Activated T-helper 2 cell treated with anti-CD3 and anti-CD28 coated beads, Interferon-gamma antibody, Interleukin-2, Interleukin-4, amounts not matched to agents 10 μg/mL and 5 μg/mL and 100 μg/mL, durations not matched to agents 14 hours and 24 hours and 36 hours (primary cell): ENCODE measurements at regions of chr13 and their contacts with region 1.

Region 1: DNA sequence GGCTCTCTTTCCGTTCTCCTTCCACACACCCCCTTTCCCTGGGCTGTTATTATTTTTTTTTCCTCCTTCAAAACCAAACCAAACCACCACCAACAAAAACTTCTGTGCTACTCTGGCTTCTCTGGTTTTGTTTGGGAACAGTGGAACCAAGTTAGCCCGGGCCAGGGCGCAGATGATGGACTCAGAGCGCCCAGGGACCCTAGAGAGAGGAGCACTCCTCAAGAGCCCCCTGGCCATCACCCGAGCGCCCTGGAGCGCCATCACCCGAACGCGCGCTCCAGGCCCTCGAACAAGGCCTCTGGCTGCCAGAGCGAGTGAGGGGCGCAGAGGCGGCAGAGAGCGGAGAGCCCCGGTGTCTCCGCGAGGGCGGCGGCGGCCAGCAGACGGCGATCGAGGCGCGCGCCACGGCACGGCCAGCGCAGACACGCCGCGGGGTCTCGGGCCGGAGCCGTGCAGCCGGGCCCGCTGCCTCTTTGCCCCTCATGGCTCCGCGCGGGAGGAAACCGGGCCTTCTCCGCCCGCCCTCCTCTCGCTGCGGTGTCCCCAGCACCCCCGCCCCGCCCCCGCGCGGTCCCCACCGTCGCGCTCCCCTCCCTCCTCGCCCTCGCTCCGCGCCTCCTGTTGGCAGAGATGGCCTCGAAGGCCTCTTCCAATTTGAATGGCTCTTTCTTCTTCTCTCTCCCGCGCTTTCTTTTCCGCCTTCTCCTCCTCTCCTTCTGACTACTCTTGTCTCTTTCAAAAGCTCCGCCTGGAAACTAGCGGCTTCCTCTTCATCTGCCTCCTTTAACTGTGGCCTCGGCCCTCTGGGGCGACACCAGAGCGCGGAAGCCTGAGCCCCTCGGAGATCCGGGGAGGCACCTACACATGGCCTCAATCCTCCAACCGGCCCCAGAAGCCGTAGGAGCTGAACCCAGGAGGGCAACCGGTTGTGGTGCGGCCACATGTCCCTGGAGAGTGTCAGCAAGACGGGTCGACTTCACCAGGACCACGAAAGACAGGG is 4.1 kb upstream of the SOX1 start:
- DNase-seq: no peak
- H3K4me3 Mint-ChIP-seq: no peak overlapping the region
- H3K27ac Mint-ChIP-seq: peak overlapping the region; percentile 49
- H3K4me1 Mint-ChIP-seq: no peaks in the 10 kb centered on the region
- H3K27me3 Mint-ChIP-seq: peaks cover 68% of the 10 kb centered on the region

Region 2: GRCh38 chr13:110306960-110307746 is 1755.7 kb before region 1 on chr13 and contains the starts of genes COL4A1 and COL4A2:
- intact Hi-C with region 1: loop called (anchors 5 kb)
- DNase-seq: no peak
- H3K4me3 Mint-ChIP-seq: no peak within 1 kb of the TSS
- H3K27ac Mint-ChIP-seq: no peak within 1 kb of the TSS
- H3K4me1 Mint-ChIP-seq: peaks cover 2% of the 10 kb centered on the region
- H3K27me3 Mint-ChIP-seq: peaks cover 69% of the 10 kb centered on the region
- total RNA-seq, gene COL4A1: not detected in 2 replicates
- total RNA-seq, gene COL4A2: not detected in 2 replicates

Region 3: DNA sequence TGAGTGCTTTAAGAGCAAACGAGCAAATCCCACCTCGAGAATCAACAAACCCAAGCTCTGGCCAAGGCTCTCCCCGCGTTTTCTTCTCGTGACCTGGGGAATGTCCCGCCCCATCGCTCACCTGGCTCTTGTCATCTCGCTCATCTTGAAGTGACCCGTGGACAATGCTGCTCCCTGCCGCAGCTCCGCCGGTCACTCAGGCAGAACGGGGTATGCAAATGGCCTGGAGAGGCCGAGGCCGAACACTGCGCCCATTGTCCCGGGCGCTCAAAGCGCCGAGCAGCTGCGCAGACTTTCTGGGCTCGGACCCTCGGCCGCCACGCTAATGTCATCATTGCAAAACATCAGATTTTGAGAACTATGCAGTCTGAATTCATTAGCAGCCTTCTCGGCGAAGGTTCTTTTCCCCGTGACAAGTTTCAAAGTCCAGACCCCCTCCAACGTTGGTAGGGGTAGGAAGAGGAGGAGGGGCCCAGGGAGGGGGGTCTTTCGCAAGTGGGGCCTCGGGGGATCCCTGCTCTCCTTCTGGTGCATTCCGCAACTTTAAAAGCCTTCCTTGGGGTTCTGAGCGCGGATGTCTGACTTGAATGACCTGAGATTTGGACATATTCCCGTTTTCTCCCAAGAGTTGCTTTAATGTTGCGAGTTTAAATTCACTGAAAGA is 43.7 kb after region 1 on chr13:
- intact Hi-C with region 1: loop called (anchors 5 kb)
- DNase-seq: no peak
- H3K4me3 Mint-ChIP-seq: no peak overlapping the region
- H3K27ac Mint-ChIP-seq: no peak overlapping the region
- H3K4me1 Mint-ChIP-seq: no peaks in the 10 kb centered on the region
- H3K27me3 Mint-ChIP-seq: peaks cover 49% of the 10 kb centered on the region

Region 4: GRCh38 chr13:112177450-112178288 is 114.8 kb after region 1 on chr13:
- intact Hi-C with region 1: no loop called
- DNase-seq: no peak
- H3K4me3 Mint-ChIP-seq: no peak overlapping the region
- H3K27ac Mint-ChIP-seq: no peak overlapping the region
- H3K4me1 Mint-ChIP-seq: no peaks in the 10 kb centered on the region
- H3K27me3 Mint-ChIP-seq: no peaks in the 10 kb centered on the region

Region 5: DNA sequence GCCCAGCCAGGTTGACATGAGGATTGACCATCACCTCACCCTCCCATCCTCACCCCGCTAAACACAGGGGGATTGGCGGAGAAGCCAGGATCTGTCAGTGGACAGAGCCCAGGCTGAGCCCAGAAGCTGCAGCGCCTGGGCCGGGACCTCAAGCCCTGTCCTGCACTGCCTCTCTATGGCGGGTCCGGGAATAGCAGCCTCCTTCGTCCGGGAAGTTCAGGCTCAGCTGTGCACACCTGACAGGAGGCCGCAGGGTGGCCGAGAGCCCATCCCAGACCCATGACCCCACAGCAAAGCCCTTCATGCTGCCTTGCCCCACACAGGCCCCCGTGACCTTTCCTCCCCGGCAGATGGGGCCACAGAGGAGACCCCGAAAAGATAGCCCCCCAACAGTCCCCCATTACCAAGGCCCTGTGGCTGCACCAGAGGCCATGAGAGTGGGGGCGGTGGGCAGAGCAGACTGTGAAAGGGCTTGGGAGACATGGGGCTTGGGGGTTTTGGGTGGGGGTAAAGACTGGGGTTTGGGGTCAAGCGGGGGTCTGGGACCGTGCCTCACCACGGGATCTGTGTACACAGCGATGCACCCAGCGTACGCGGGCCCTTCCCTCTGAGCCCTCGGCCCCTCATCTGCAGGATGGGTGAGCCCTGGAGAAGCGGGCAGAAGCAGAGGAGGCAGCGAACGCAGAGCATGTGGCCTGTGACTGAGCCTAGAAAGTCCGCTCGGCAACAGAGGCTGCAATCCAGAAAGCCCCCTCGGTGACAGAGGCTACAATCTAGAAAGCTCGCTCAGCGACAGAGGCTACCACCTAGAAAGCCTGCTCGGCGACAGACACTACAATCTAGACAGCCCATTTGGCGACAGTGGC is 381.4 kb after region 1 on chr13:
- intact Hi-C with region 1: loop called (anchors 5 kb)
- DNase-seq: peak; percentile 34
- H3K4me3 Mint-ChIP-seq: no peak overlapping the region
- H3K27ac Mint-ChIP-seq: no peak overlapping the region
- H3K4me1 Mint-ChIP-seq: no peaks in the 10 kb centered on the region
- H3K27me3 Mint-ChIP-seq: peaks cover 7% of the 10 kb centered on the region